Left ventricle myocardium inferior (tissue), 1 donor: ENCODE measurements at regions of chr4 and their contacts with region 1.

Region 1: DNA sequence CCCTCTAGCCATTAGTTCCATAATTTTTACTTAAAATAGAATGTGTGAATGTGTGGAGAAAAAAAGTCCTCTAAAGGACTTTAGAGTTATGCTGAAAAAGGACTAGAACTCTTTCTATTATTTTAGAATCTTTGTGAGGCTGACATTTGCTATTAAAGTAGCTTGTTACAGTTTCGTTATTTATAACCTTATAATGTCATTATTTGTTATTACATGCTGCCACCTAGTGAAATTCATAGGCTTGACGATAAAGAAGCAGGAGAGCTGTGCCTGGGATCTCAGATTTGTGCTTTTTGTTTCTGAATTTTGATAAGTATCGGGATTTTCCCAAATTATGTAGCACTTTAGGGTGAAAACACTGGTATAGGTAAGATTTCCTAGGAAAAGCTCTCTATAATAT is 38.5 kb upstream of the TAPT1 start:
- DNase-seq: no peak
- H3K4me3 ChIP-seq: no peak overlapping the region
- H3K27ac ChIP-seq: no peak overlapping the region
- H3K4me1 ChIP-seq: peaks cover 10% of the 10 kb centered on the region
- H3K27me3 ChIP-seq: no peaks in the 10 kb centered on the region
- CTCF ChIP-seq: peak; percentile 78

Region 2: GRCh38 chr4:16026160-16026761 is 238.5 kb before region 1 on chr4:
- intact Hi-C with region 1: loop called (anchors 2 kb)
- DNase-seq: no peak
- H3K4me3 ChIP-seq: no peak overlapping the region
- H3K27ac ChIP-seq: no peak overlapping the region
- H3K4me1 ChIP-seq: peaks cover 55% of the 10 kb centered on the region
- H3K27me3 ChIP-seq: no peaks in the 10 kb centered on the region
- CTCF ChIP-seq: peak; percentile 89

Region 3: DNA sequence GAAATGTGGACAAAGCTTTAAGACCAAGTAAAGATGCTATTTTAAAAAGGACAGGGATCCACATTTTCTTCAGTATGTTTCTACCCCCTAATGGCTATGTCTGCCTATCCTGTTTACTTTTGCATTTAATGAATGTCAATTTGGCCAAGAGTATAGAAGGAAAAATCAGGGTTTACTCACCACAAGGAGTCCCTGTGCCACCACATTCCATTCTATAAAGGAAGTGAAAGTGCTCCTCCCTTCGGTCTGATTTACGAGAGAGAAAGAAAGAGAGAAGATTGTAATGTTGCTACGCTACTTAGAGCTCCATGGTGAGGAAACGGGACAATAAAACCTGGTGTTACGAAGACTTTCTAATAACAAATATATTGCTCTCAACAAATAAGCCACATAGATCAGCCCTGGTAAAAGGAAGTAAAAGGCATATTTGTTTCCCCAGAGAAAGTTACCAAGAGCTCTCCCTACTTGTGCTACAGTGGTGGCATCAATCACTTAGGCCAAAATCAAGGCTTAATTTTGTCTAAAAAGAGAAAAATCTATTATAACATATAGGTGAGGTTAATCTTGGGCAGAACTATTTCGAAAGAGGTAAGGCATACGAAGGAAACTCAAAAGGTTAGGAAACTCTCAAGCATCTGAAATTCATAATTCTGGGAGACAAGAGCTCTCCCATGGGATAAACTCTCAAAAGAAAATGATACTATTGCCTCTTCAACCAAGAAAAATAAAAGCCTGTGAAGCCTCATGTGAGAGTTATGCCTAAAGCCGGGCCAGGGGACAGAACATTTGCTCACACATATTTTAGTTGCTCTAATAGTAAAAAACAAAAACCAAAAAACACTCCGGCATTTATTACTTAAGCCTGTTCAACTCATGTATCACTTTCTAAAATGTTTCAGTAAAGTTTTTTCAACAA is 68.1 kb before region 1 on chr4:
- intact Hi-C with region 1: loop called (anchors 5 kb)
- DNase-seq: no peak
- H3K4me3 ChIP-seq: peak overlapping the region; percentile 46
- H3K27ac ChIP-seq: peak overlapping the region; percentile 66
- H3K4me1 ChIP-seq: peaks cover 74% of the 10 kb centered on the region
- H3K27me3 ChIP-seq: no peaks in the 10 kb centered on the region
- CTCF ChIP-seq: peak; percentile 58

Region 4: DNA sequence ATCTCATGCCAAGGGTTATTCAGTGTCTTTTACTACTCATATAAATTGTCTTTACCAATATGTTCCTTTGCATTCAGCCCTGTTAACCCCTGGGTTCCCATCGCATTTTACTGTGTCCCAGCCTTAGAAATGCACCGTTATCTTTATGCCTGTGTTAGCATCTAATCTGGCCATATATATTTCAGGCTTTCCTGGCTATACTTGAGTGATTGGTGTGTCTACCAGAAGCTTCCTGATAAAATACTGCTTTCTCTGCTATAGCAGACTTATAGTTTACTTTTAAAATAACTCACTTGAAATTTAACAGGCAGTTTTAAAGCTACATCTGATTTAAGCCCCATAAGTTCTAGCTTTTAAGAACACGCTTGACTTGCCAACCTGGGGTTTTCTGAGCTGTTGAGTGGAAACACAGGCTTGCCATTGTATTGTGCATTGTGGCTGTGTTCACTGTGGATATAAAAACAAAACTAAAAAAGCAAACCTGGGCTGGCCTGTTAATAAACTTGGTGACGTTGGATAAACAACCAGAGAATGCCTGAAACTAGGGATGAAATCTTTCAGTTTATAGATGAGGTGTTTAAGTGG is 146.8 kb after region 1 on chr4:
- intact Hi-C with region 1: no loop called
- DNase-seq: no peak
- H3K4me3 ChIP-seq: no peak overlapping the region
- H3K27ac ChIP-seq: no peak overlapping the region
- H3K4me1 ChIP-seq: no peaks in the 10 kb centered on the region
- H3K27me3 ChIP-seq: no peaks in the 10 kb centered on the region
- CTCF ChIP-seq: no peak